GM10248 (cell line): ENCODE measurements at regions of chr14 and their contacts with region 1.

Region 1: DNA sequence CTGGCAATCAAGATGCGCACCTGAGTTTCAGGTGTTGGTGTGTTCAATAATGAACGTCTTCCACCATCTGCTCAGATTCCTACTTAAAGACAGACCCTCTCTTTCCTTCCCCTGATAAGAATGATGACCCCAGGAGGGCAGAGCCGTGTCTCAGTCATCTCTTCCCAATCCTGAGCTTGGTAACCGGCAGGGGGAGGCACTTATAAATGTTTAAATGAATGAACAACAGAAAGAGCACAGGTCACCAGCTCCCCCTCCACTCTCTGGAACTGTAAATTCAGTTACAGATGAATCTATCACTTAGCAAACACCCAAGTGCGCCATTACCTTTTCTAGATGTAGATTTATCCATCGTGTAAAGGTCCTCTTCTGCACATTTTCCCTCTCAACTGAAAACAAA is 72.4 kb upstream of the DICER1 start:
- DNase-seq: no peak
- CTCF ChIP-seq: no peak

Region 2: DNA sequence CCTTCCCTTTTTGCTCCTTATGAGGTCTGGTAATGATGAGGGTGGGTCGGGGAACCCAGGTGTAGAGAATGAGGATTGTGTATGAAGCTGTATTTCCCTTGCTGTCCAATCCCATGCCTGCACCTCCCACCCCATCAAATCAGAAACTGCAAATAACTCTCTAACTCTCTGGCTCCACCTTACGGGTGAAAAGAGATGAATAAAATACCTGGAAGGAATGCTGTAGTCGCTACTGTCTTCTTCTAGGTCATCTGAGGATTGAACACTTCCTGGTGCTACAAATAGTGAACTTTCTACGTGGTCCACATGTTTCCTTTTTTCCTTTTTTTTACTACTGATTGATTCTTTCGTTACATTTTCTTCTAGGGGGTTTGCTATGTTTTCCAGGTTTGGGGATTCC is 33.5 kb before region 1 on chr14:
- CTCF ChIA-PET with region 1: no interaction called
- POLR2A ChIA-PET with region 1: no interaction called
- DNase-seq: peak; percentile 76
- CTCF ChIP-seq: peak; percentile 20

Region 3: DNA sequence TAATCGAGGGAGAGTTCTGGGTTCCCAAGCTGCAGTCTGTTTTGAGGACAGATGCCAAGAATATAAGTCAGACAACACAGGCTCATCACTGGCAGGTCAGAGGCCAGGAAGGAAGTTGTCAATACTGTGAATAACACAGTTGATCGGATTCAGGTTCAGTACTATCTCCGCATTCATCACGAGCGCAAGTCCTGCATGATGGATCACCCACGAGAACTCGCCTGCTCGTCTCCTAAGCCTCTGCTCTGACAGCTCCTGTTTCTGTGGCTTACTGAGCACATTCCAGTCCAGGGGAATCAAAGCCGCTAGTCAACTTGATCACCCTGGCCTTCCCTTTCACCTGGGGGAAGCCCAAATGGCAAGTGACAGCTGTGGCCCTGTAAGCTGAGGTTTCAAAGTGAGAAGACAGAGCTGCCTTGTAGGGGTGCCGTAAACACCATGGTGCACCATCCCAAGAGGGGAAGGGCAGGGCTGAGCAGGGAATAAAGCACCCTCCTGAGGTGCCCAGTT is 12.3 kb before region 1 on chr14:
- CTCF ChIA-PET with region 1: interaction called, 12 read pairs
- POLR2A ChIA-PET with region 1: no interaction called
- DNase-seq: no peak
- CTCF ChIP-seq: no peak